ENCODE measurements at regions of chr9 and their contacts with region 1.

Region 1: DNA sequence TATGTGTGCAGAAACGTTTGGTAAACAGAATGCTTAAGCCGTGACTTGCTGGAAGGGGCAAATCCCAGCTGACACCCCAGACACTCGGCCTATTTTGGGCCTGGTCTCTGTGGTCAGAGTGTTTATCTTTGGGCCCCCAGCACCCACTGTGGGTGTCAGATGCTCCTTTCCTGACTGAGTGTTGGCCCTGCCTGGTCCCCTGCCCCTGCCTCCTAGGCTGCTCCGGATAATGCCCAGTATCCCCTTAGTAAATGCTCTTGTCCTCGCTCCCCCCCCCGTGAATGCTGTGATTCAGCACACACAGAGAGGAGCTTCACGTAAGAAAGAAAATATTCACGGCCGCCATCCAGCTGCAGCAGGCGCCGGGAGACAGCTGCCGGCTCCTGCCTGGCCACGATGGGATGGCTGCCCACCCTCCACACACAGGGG is 11.3 kb upstream of the ANGPTL2 start:
- DNase-seq: no peak
- ATAC-seq: peak; percentile 40
- H3K4me3 Mint-ChIP-seq: no peak overlapping the region
- H3K27ac Mint-ChIP-seq: 0 out of 2 replicates have a peak overlapping the region, but pooled peaks have one; percentile 17
- H3K4me1 Mint-ChIP-seq: peaks cover 37% of the 10 kb centered on the region
- H3K27me3 Mint-ChIP-seq: no peaks in the 10 kb centered on the region
- CTCF ChIP-seq: no peak

Region 2: GRCh38 chr9:126965541-126966428 is 168.0 kb before region 1 on chr9:
- CTCF ChIA-PET with region 1: interaction called, 10 read pairs
- POLR2A ChIA-PET with region 1: no interaction called
- DNase-seq: peak; percentile 57
- ATAC-seq: peak; percentile 94
- H3K4me3 Mint-ChIP-seq: no peak overlapping the region
- H3K27ac Mint-ChIP-seq: peak overlapping the region; percentile 78
- H3K4me1 Mint-ChIP-seq: peaks cover 16% of the 10 kb centered on the region
- H3K27me3 Mint-ChIP-seq: no peaks in the 10 kb centered on the region
- CTCF ChIP-seq: peak; percentile 34; the same call in 1 of the 2 replicates

Region 3: GRCh38 chr9:127053057-127053821 is 80.5 kb before region 1 on chr9:
- CTCF ChIA-PET with region 1: no interaction called
- POLR2A ChIA-PET with region 1: no interaction called
- DNase-seq: no peak
- ATAC-seq: no peak
- H3K4me3 Mint-ChIP-seq: no peak overlapping the region
- H3K27ac Mint-ChIP-seq: peak overlapping the region; percentile 26; the same call in 1 of the 2 replicates
- H3K4me1 Mint-ChIP-seq: peaks cover 7% of the 10 kb centered on the region
- H3K27me3 Mint-ChIP-seq: no peaks in the 10 kb centered on the region
- CTCF ChIP-seq: no peak

Region 4: DNA sequence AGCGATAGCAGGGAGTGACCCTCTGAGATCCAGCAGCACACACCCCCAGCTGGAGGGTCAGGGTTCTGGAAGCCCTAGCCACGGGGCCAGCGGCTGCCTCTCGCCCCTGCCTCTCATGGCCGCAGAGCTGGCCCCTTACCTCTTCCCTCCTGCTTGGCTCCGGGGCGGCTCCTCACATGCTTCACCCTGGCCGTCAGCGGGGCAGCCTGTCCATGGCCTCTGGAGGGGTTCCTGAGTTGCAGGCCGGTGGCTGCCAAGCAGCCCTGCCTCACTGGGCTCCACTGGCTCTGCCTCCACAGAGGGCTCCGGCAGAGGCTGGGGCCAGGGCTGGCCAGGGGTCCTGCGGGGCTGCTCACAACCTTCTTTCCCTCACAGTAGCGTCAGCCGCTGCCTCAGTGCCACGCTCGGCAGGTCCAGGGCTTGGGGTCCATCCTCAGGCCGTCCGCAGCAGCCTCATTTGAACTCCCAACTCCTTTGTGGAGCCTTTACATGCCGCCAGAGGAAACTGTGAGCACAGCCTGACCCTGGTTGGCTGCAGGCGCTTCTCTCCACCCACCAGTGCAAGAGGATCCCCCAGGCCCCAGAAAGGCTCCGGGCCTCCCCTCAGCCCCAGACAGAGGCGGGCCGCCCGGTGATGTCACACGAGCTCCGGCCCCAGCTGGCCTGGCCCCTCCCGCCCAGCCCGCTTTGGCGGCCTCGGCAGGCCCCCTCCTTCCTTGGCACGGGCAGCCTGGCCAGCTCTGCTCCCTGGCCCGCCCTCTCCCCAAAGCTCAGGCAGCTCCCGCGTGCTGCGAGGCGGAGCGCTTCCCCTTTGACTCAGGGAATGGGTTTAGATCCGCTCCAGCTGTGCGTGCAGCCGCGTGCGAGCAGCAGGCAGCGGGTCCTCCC is 11.3 kb before region 1 on chr9 and contains the start of gene ANGPTL2:
- CTCF ChIA-PET with region 1: interaction called, 13 read pairs
- POLR2A ChIA-PET with region 1: interaction called, 6 read pairs
- DNase-seq: peak; percentile 91
- ATAC-seq: peak; percentile 92
- H3K4me3 Mint-ChIP-seq: peak within 1 kb of the TSS; percentile 77
- H3K27ac Mint-ChIP-seq: peak within 1 kb of the TSS; percentile 54; the same call in 1 of the 2 replicates
- H3K4me1 Mint-ChIP-seq: peaks cover 29% of the 10 kb centered on the region
- H3K27me3 Mint-ChIP-seq: no peaks in the 10 kb centered on the region; the same call in none of the 2 replicates
- CTCF ChIP-seq: no peak
- total RNA-seq, gene ANGPTL2: 4.5 to 6.7 TPM (median 6.3 TPM) in 3 replicates